ENCODE measurements at regions of chr3 and their contacts with region 1.

Region 1: DNA sequence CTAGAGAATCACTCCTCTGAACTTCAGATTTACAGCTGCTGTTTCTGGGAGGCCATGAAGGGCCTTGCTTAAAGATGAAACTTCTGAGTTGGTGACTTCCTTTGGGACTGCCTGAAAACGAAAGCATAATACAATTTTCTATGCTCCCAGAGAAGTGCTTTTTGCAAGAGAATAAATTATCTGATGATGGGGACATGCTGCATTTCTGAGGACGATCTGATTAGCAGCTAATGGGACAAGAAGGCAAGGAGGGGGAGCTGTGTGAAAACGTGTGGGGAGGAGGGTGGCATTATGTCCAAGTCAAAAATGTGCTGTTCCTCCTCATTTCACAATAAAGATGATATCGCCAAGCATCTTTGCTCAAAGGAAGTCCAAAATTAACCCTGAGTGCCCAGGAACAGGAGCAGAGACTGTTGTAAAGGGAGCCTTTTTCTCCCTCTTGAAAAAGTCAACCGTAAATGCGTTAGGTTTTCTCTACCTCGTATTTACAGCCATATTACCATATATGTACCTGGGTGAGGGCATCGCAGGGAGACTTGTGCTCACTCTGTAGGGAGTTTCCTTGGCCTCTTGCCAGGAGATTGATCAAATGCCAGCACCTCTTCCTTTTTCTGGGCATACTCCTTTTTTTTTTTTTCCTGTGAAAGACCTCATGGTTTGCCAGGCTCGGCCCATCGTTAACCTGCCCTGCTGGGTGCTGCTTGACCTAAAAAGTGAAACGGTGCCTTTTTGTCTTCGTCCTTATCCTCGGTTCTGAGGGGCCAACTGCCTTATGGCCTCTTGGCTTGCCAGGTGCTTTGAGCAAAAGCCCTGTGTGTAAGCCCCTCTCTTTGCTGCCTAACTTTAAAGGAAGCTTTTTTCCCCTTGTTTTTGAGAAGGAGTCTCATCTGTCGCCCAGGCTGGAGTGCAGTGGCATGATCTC is 11.5 kb downstream of the ITPR1 start:
- DNase-seq: no peak
- H3K4me3 ChIP-seq: peak overlapping the region; percentile 33 to 41 (median 40)
- H3K27ac ChIP-seq: peak overlapping the region; percentile 83 to 88 (median 88)
- H3K4me1 ChIP-seq: peaks cover 41 to 80% (median 62%) of the 10 kb centered on the region in 4 donors
- H3K27me3 ChIP-seq: no peaks in the 10 kb centered on the region
- CTCF ChIP-seq: no peak
- EP300 ChIP-seq: no peak
- POLR2A ChIP-seq: no peak

Region 2: DNA sequence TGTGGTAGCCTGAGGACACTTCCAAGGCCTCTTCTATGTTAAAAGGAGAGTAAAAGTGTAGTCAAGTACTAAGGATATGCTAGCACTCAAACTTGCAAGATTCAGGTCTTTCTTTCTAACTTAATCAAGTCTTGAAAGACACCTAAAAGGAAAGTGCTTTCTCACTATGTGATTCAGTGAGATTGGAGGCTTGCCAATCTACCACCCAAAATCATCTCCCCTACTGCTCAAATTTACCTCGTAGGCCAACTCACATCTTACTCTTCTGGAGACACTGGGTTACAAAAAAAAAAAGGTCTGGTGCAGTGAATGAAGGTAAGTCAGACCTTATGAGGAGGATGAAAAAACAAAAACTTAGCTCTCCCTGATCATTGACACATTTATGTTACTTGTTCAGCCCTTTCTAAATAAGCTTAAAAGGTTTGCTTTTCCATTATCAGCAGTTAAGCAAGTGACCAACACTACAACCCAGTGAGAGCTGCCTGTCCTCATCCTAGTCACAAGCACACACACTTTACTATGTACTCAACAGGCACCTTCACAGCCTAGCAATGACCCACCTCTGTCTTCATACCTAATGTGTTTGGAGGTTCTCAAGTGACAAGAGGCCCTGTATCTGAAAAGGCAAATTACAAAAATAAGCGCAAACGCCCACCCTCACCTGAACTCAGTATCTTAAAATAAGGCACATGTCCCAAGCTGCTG is 57.2 kb before region 1 on chr3:
- intact Hi-C with region 1: no loop called
- DNase-seq: no peak
- H3K4me3 ChIP-seq: no peak overlapping the region
- H3K27ac ChIP-seq: no peak overlapping the region
- H3K4me1 ChIP-seq: no peaks in the 10 kb centered on the region
- H3K27me3 ChIP-seq: no peaks in the 10 kb centered on the region
- CTCF ChIP-seq: no peak
- EP300 ChIP-seq: no peak
- POLR2A ChIP-seq: no peak

Region 3: DNA sequence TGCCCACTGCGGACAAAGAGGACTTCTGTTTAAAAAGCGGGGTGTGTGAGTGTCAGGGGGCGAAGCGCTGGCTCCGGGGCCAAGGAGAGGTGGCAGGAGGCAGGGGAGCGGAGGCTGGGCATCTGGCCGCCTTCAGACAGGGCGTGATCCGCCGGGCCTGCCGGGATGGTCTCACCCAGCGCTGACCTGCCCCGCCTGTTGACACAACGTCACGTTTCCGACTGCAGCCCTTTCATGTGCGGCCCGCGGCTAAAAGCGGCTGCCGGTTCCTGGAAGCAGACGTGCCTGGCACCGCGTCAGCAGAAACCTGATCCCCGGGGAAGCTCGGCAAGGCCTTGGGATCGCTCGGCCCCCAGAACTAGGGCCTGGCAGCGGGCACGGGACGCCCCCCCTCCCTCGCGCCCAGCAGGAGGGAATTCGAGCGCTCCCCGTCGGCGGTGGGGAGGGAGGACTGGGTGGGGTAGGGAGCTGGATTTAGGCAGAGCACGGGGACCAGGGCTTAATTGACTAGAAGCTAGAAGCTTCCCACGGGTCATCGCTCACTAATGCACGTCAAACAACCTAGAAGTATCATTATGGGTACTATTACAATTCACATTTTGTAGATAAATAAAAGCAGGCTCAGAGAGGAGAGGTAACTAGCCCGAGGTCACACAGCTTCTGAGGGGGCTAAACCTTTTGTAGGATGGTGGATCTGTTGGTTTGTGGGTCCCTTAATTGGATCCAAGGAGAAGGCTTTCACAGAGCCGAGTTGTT is 482.4 kb after region 1 on chr3:
- intact Hi-C with region 1: loop called (anchors 10 kb)
- DNase-seq: peak; percentile 99
- H3K4me3 ChIP-seq: peak overlapping the region; percentile 49 to 59 (median 54)
- H3K27ac ChIP-seq: peak overlapping the region; percentile 95 to 99 (median 97)
- H3K4me1 ChIP-seq: peaks cover 65 to 75% (median 74%) of the 10 kb centered on the region in 4 donors
- H3K27me3 ChIP-seq: no peaks in the 10 kb centered on the region
- CTCF ChIP-seq: no peak
- EP300 ChIP-seq: peak; percentile 98
- POLR2A ChIP-seq: no peak

Measured in esophagus muscularis mucosa (tissue), 4 donors.